ENCODE measurements at regions of chr3 and their contacts with region 1.

Region 1: GRCh38 chr3:114152519-114153151 is 26.2 kb downstream of the DRD3 start:
- DNase-seq: peak; percentile 61
- ATAC-seq: peak; percentile 95
- H3K4me3 ChIP-seq: peak overlapping the region; percentile 48 to 74 (median 49); a peak in 5 of 6 replicates
- H3K27ac ChIP-seq: no peak overlapping the region
- H3K4me1 ChIP-seq: peaks cover 5% of the 10 kb centered on the region; the same call in 1 of the 2 replicates
- H3K27me3 ChIP-seq: peaks cover 0 to 34% of the 10 kb centered on the region in 2 experiments; a peak in 3 of 5 replicates
- CTCF ChIP-seq: peak; percentile 88
- EP300 ChIP-seq: no peak
- POLR2A ChIP-seq: no peak
- RAD21 ChIP-seq: peak; percentile 66

Region 2: GRCh38 chr3:113736548-113737089 is 416.0 kb before region 1 on chr3:
- CTCF ChIA-PET with region 1: no interaction called
- POLR2A ChIA-PET with region 1: no interaction called
- in situ Hi-C with region 1: no loop called
- intact Hi-C with region 1: loop called (anchors 1 kb)
- DNase-seq: peak; percentile 60
- ATAC-seq: peak; percentile 83
- H3K4me3 ChIP-seq: no peak overlapping the region
- H3K27ac ChIP-seq: peak overlapping the region; percentile 36
- H3K4me1 ChIP-seq: peaks cover 63% of the 10 kb centered on the region
- H3K27me3 ChIP-seq: no peaks in the 10 kb centered on the region
- CTCF ChIP-seq: peak; percentile 61
- EP300 ChIP-seq: no peak
- POLR2A ChIP-seq: no peak; a peak in 1 of 4 replicates
- RAD21 ChIP-seq: peak; percentile 83

Region 3: GRCh38 chr3:113844622-113845222 is 307.9 kb before region 1 on chr3:
- CTCF ChIA-PET with region 1: no interaction called
- POLR2A ChIA-PET with region 1: no interaction called
- in situ Hi-C with region 1: no loop called
- intact Hi-C with region 1: loop called (anchors 5 kb)
- DNase-seq: peak; percentile 39
- ATAC-seq: peak; percentile 46; the same call in 1 of the 3 replicates
- H3K4me3 ChIP-seq: no peak overlapping the region
- H3K27ac ChIP-seq: no peak overlapping the region
- H3K4me1 ChIP-seq: no peaks in the 10 kb centered on the region
- H3K27me3 ChIP-seq: no peaks in the 10 kb centered on the region
- CTCF ChIP-seq: peak; percentile 65
- EP300 ChIP-seq: no peak
- POLR2A ChIP-seq: no peak
- RAD21 ChIP-seq: no peak; the same call in 1 of the 2 replicates

Region 4: DNA sequence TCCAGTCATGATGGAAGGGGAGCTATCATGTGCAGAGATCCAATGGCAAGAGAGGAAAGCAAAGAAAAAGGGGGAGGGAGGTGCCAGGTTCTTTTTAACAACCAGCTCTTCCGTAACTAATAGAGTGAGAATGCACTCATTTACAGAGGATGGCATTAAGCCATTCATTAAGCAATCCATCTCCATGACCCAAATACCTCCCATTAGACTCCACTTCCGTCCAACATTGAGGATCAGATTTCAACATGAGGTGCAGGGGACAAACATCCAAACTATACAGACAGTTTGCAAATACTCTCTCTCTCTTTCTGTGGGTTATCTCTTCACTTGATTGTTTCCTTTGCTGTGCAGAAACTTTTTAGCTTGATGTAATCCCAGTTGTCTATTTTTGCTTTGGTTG is 183.6 kb before region 1 on chr3:
- CTCF ChIA-PET with region 1: no interaction called
- POLR2A ChIA-PET with region 1: no interaction called
- in situ Hi-C with region 1: no loop called
- intact Hi-C with region 1: loop called (anchors 10 kb)
- DNase-seq: peak; percentile 4
- ATAC-seq: no peak
- H3K4me3 ChIP-seq: no peak overlapping the region
- H3K27ac ChIP-seq: no peak overlapping the region
- H3K4me1 ChIP-seq: no peaks in the 10 kb centered on the region
- H3K27me3 ChIP-seq: no peaks in the 10 kb centered on the region
- CTCF ChIP-seq: no peak
- EP300 ChIP-seq: no peak
- POLR2A ChIP-seq: no peak
- RAD21 ChIP-seq: no peak

Region 5: GRCh38 chr3:114179575-114179974 is 26.9 kb after region 1 on chr3:
- CTCF ChIA-PET with region 1: interaction called, 11 read pairs
- POLR2A ChIA-PET with region 1: no interaction called
- in situ Hi-C with region 1: no loop called
- intact Hi-C with region 1: loop called (anchors 1 kb)
- DNase-seq: peak; percentile 18
- ATAC-seq: peak; percentile 86
- H3K4me3 ChIP-seq: no peak overlapping the region
- H3K27ac ChIP-seq: no peak overlapping the region
- H3K4me1 ChIP-seq: no peaks in the 10 kb centered on the region
- H3K27me3 ChIP-seq: no peaks in the 10 kb centered on the region
- CTCF ChIP-seq: peak; percentile 51
- EP300 ChIP-seq: no peak
- POLR2A ChIP-seq: no peak
- RAD21 ChIP-seq: no peak

Region 6: DNA sequence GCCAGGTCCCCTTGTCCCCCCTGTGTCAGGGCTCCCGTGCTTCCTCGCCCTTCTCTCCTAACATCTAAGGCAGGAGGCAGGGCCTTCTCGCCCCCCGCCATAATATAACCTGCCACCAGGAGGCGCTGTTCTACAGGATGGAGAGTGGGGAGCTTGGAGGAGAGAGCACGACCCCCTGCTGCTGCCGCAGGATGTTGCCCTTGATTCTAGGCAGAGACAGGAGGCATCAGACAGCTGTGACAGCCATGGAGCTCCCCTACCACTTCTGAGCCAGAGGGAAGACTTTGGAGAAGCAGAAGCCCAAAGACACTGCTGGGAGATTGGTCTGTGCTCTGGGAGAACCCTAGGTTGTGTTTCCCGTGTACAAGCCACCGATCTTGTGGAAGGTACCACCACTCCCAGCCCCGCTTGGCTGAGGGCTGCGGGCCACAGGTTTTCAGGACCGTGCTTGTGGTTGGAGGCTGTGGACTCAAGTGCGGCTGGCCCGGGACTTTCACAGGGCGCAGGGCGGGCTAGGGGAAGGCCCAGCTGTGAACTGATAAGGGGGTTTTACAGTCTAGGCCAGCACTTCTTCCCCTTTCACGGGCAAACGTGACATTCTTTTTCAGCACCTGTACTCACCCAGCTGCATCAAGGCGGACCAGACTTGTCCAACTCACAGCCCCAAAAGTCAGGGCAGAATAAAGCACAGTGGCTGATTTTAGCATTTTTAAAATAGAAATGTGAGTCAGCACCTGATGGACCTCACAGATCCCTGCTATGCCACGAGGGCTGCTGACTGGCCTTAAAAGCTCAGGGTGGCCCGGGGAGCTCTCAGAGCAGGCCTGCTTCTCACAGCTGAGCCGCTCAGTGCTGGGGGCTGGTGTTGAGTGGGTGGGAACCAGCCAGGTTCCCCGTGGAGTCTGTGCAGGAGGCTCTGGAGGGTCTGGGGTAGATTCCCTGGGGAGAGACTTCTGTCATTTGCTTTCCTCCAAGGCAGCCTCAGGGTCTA is 138.6 kb after region 1 on chr3:
- CTCF ChIA-PET with region 1: no interaction called
- POLR2A ChIA-PET with region 1: no interaction called
- in situ Hi-C with region 1: loop called (anchors 10 kb)
- intact Hi-C with region 1: no loop called
- DNase-seq: peak; percentile 54
- ATAC-seq: peak; percentile 98
- H3K4me3 ChIP-seq: peak overlapping the region in 1 of 3 experiments; percentile 11; a peak in 1 of 6 replicates
- H3K27ac ChIP-seq: no peak overlapping the region
- H3K4me1 ChIP-seq: no peaks in the 10 kb centered on the region
- H3K27me3 ChIP-seq: peaks cover 0 to 5% of the 10 kb centered on the region in 2 experiments; a peak in 1 of 5 replicates
- CTCF ChIP-seq: peak; percentile 89
- EP300 ChIP-seq: no peak
- POLR2A ChIP-seq: no peak
- RAD21 ChIP-seq: peak; percentile 37; the same call in 1 of the 2 replicates

Region 7: GRCh38 chr3:114299421-114299820 is 146.8 kb after region 1 on chr3:
- CTCF ChIA-PET with region 1: no interaction called
- POLR2A ChIA-PET with region 1: no interaction called
- in situ Hi-C with region 1: loop called (anchors 10 kb)
- intact Hi-C with region 1: loop called (anchors 2 kb)
- DNase-seq: peak; percentile 40
- ATAC-seq: peak; percentile 99
- H3K4me3 ChIP-seq: no peak overlapping the region
- H3K27ac ChIP-seq: no peak overlapping the region
- H3K4me1 ChIP-seq: no peaks in the 10 kb centered on the region
- H3K27me3 ChIP-seq: no peaks in the 10 kb centered on the region; a peak in 1 of 5 replicates
- CTCF ChIP-seq: peak; percentile 80
- EP300 ChIP-seq: no peak
- POLR2A ChIP-seq: no peak
- RAD21 ChIP-seq: no peak

Region 8: GRCh38 chr3:114456742-114457141 is 304.1 kb after region 1 on chr3:
- CTCF ChIA-PET with region 1: no interaction called
- POLR2A ChIA-PET with region 1: no interaction called
- in situ Hi-C with region 1: no loop called
- intact Hi-C with region 1: no loop called
- DNase-seq: no peak
- ATAC-seq: no peak
- H3K4me3 ChIP-seq: no peak overlapping the region
- H3K27ac ChIP-seq: no peak overlapping the region
- H3K4me1 ChIP-seq: no peaks in the 10 kb centered on the region
- H3K27me3 ChIP-seq: no peaks in the 10 kb centered on the region
- CTCF ChIP-seq: no peak
- EP300 ChIP-seq: no peak
- POLR2A ChIP-seq: no peak
- RAD21 ChIP-seq: no peak

Measured in HepG2 (cell line).